Activated CD4-positive, alpha-beta memory T cell treated with anti-CD3 and anti-CD28 coated beads for 36 hours (primary cell): ENCODE measurements at regions of chr6 and their contacts with region 1.

Region 1: DNA sequence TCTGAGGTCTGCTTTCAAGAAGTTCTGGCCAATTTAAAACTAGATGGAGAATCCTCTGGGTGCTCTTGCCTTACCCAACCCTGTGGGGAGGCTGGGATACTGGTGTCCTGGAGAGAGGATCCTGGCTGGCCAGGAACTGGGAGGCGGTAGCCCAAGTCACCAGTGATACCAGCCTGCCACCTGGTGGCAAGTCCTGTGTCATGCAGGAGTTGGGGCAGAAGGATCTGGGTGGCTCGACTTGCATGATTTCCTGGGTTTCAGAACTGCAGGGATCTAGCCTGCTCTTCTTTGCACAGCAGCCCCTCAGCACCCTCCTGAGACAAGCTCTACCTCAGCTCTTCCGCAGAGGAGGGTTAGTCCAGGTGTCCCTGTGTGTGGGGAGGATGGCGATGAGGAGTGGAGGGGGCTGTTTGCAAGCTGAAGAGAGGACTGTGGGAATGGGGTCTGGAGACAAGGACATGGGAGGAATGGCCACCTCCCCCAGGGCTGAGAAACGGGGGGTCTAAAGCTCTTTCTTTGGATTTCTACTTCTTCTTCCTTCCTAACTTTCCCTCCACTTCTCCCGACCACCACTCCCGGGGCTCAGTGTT is 4.2 kb downstream of the KCNK17 start:
- DNase-seq: peak; percentile 76
- H3K4me3 Mint-ChIP-seq: no peak overlapping the region
- H3K27ac Mint-ChIP-seq: no peak overlapping the region
- H3K4me1 Mint-ChIP-seq: peaks cover 5% of the 10 kb centered on the region
- H3K27me3 Mint-ChIP-seq: peaks cover 36% of the 10 kb centered on the region

Region 2: DNA sequence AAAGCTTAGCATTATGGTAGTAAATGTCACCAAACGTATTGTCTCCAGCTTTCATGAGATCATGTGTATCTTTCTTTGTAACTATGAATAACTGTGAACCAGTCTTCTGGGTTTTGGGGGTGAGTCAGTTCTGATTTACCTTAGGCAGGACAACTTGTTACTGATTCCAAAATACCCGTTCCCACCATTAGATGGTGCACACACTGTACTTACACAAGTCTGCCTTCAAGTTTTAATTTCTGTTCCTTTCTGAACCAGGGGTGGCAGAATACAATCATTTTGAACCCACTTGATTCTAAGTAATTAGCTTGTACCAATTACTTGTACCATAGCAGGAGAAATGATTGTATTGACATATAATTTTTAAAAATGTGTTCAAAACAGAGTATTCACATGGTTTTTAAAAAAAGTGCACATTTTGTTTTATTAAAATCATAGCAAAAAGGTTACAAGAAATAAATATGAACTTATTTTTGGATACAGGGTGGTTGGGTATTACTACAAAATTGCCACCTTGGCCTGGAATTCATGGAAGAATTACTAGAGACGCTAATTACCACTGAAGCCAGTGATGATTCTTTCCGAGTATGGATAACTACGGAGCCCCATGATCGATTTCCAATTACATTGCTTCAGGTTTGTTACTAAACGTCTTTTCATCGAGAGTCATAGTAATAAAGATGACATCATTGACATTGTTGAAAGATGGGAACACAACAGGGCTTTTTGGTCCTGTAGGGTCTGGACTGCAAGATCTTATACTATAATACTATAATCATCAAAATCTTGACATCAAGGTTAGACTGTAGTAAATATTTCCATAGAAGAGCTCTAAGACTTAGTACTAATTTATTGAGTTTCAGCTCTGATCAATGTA is 336.6 kb before region 1 on chr6:
- CTCF ChIA-PET with region 1: interaction called, 11 read pairs
- POLR2A ChIA-PET with region 1: no interaction called
- intact Hi-C with region 1: no loop called
- DNase-seq: peak; percentile 13
- H3K4me3 Mint-ChIP-seq: no peak overlapping the region
- H3K27ac Mint-ChIP-seq: no peak overlapping the region
- H3K4me1 Mint-ChIP-seq: peaks cover 2% of the 10 kb centered on the region
- H3K27me3 Mint-ChIP-seq: peaks cover 13% of the 10 kb centered on the region

Region 3: DNA sequence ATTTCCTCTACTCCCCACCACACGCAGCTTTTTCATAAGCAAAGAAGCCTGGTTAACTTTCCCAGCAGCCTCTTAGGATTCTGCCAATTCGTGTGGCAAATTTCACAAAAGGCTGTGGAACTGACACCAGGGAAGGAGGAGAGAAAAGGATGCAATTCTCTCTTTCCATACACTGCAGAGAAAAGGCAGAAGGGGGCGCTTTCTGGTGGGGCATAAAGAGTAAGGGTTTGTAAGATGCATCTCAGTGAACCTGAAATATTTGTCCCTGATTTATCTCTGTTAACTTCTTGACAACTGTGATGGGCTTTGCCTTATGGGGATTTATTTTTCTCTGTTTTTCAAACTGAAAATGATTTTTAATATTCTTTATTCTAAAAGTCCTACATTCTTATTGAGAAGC is 307.0 kb before region 1 on chr6:
- CTCF ChIA-PET with region 1: interaction called, 6 read pairs
- POLR2A ChIA-PET with region 1: no interaction called
- intact Hi-C with region 1: loop called (anchors 5 kb)
- DNase-seq: peak; percentile 20
- H3K4me3 Mint-ChIP-seq: no peak overlapping the region
- H3K27ac Mint-ChIP-seq: no peak overlapping the region
- H3K4me1 Mint-ChIP-seq: no peaks in the 10 kb centered on the region
- H3K27me3 Mint-ChIP-seq: peaks cover 25% of the 10 kb centered on the region

Region 4: DNA sequence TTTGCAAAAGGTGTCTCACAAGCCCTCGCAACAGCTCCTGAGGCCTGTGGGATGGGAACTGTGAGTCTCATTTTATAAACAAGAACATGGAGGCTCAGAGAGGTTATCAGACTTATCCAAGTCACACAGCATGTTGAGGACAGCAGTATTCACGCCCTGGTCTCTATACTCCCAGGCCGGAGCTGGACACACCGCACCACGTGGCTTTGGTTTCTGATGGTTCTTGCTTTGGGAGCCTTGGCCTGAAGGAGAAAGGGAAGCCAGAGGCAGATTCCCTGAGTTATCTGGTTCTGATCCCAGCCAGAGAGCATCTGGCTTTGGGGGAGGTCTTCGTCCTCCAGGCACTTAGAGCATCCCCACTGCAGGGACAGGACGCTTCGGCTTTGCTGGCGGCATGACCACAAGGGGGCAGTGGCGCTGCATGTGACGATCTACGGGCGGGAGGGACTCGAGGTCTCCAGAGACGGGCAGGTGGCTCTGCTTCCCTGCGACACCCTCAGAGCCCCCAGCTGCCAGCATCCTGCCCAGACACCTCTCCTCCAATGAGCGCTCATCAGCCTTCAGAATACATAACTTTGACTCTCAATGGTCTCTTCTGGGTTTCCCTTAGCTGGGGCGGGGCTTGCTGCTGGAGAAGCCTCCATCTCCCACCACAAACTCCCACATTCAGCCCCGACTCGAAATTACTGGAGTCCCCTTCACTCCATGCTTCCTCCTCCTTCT is 143.7 kb before region 1 on chr6:
- CTCF ChIA-PET with region 1: interaction called, 469 read pairs
- POLR2A ChIA-PET with region 1: no interaction called
- intact Hi-C with region 1: loop called (anchors 1 kb)
- DNase-seq: peak; percentile 90
- H3K4me3 Mint-ChIP-seq: no peak overlapping the region
- H3K27ac Mint-ChIP-seq: no peak overlapping the region
- H3K4me1 Mint-ChIP-seq: peaks cover 4% of the 10 kb centered on the region
- H3K27me3 Mint-ChIP-seq: no peaks in the 10 kb centered on the region

Region 5: DNA sequence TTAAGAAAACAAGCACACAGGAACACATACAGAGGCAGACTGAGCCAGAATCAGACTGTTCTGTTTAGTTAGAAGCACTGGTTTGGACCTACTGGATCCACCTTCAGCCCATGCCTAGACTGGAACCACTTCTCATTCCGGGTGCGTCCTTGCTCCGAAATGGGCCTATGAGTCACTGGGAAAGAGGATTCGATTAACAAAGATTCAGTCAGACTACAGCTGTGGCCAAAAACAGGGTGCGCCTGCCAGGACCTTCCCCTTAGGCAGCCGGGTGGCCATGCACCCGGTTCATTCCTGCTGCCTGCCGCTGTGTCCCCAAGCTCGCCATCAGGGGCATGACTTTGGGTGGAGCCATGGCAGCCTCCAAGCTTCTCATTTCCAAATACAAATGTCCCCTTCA is 66.2 kb before region 1 on chr6:
- CTCF ChIA-PET with region 1: no interaction called
- POLR2A ChIA-PET with region 1: no interaction called
- intact Hi-C with region 1: no loop called
- DNase-seq: no peak
- H3K4me3 Mint-ChIP-seq: no peak overlapping the region
- H3K27ac Mint-ChIP-seq: no peak overlapping the region
- H3K4me1 Mint-ChIP-seq: peaks cover 5% of the 10 kb centered on the region
- H3K27me3 Mint-ChIP-seq: no peaks in the 10 kb centered on the region